Common myeloid progenitor, CD34-positive (primary cell): ENCODE measurements at regions of chr3 and their contacts with region 1.

Region 1: GRCh38 chr3:107740992-107741896 is 218.5 kb downstream of the BBX start:
- DNase-seq: peak; percentile 39 to 67 (median 55)
- H3K4me3 ChIP-seq: no peak overlapping the region
- H3K27ac ChIP-seq: no peak overlapping the region
- H3K4me1 ChIP-seq: peaks cover 0 to 3% (median under 1%) of the 10 kb centered on the region in 4 experiments
- H3K27me3 ChIP-seq: no peaks in the 10 kb centered on the region

Region 2: DNA sequence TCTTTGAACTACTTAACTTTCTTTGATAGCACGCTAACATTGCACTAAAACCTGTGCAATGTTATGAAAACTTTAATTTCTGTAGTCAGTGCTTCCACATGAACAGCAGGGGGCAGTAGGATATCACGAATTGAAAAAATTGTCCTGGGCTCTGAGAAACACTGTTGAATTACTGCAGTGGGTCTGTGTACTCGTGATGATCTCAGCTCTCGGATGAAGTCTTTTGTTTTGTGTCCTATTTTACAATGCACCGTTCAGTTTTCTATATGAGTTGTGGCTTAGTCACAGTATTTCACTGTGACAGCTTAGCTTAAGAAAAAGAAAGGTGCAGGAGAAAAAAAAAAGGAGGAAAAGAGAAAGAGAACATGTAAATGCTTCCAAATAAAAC is 505.3 kb before region 1 on chr3:
- CTCF ChIA-PET with region 1: interaction called, 32 read pairs
- POLR2A ChIA-PET with region 1: interaction called, 3 read pairs
- DNase-seq: peak; percentile 79 to 91 (median 85)
- H3K4me3 ChIP-seq: peak overlapping the region in 6 of 7 experiments; percentile 31 to 77 (median 49)
- H3K27ac ChIP-seq: no peak overlapping the region
- H3K4me1 ChIP-seq: peaks cover 0 to 7% (median 3%) of the 10 kb centered on the region in 4 experiments
- H3K27me3 ChIP-seq: no peaks in the 10 kb centered on the region

Region 3: DNA sequence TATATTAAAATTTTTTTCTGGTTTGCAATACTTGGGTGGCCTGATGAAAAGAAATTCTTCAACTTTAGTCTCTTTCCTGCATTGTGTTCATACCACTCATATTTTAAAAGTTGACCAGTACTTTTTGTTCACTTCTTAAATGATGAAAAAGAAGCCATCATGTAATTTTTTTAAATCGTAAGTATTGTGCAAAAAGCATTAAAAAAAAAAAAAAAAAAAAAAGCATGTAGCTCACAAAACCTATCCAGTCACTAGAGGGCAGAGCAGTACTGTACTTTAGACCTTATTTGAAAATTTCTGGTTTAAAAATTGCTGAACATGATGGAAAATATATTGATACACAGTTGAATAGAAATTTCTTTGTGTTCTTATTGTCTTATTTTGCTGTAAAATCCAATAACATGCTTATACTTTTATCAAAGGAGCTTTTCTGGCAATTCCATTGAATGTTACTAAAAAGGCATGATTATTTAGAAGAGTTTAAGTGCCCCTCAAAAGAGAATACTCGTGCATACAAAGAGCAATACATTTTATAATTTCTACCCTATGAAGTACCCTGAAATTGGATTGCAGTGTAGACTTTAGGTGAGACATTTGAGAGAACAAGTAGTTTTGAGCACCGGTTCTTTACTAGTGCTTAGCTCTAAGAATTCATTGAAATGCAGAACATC is 80.8 kb before region 1 on chr3:
- CTCF ChIA-PET with region 1: interaction called, 23 read pairs
- POLR2A ChIA-PET with region 1: no interaction called
- DNase-seq: peak; percentile 35 to 71 (median 63)
- H3K4me3 ChIP-seq: no peak overlapping the region
- H3K27ac ChIP-seq: no peak overlapping the region
- H3K4me1 ChIP-seq: no peaks in the 10 kb centered on the region
- H3K27me3 ChIP-seq: no peaks in the 10 kb centered on the region

Region 4: GRCh38 chr3:107690522-107691138 is 50.6 kb before region 1 on chr3:
- CTCF ChIA-PET with region 1: interaction called, 17 read pairs
- POLR2A ChIA-PET with region 1: no interaction called
- DNase-seq: peak; percentile 72 to 88 (median 86)
- H3K4me3 ChIP-seq: no peak overlapping the region
- H3K27ac ChIP-seq: no peak overlapping the region
- H3K4me1 ChIP-seq: no peaks in the 10 kb centered on the region
- H3K27me3 ChIP-seq: no peaks in the 10 kb centered on the region

Region 5: GRCh38 chr3:107753480-107753879 is 12.2 kb after region 1 on chr3:
- CTCF ChIA-PET with region 1: interaction called, 13 read pairs
- POLR2A ChIA-PET with region 1: no interaction called
- DNase-seq: peak; percentile 24 to 59 (median 57)
- H3K4me3 ChIP-seq: no peak overlapping the region
- H3K27ac ChIP-seq: no peak overlapping the region
- H3K4me1 ChIP-seq: no peaks in the 10 kb centered on the region
- H3K27me3 ChIP-seq: no peaks in the 10 kb centered on the region

Region 6: DNA sequence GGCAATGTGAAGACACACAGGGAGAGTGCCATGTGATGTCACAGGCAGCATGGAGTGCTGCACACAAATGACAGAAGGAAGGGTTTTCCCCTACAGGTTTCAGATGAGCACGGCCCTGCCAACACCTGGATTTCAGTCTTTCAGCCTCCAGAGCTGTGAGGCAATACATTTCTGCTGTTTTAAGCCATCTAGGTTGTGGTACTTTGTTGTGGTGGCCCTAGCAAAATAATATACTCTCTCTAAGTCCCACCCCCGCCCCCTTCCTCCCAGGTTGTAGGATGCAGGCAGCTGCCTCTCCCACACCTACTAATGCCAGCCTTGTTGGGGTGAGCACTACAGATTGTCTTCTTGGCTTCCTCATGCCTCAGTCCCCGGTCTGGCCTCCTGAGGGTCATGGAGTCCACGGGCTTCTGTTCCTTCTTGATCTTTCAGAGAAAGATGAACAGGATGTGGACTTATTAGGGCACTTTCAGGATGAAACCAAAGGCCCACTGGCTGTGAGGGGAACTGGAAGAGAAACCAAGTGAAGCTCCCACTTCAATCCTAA is 169.5 kb after region 1 on chr3:
- CTCF ChIA-PET with region 1: no interaction called
- POLR2A ChIA-PET with region 1: no interaction called
- DNase-seq: no peak
- H3K4me3 ChIP-seq: no peak overlapping the region
- H3K27ac ChIP-seq: no peak overlapping the region
- H3K4me1 ChIP-seq: no peaks in the 10 kb centered on the region
- H3K27me3 ChIP-seq: no peaks in the 10 kb centered on the region

Region 7: GRCh38 chr3:107992981-107993684 is 251.9 kb after region 1 on chr3:
- CTCF ChIA-PET with region 1: no interaction called
- POLR2A ChIA-PET with region 1: no interaction called
- DNase-seq: no peak
- H3K4me3 ChIP-seq: no peak overlapping the region
- H3K27ac ChIP-seq: no peak overlapping the region
- H3K4me1 ChIP-seq: peaks cover 0 to 8% (median 0%) of the 10 kb centered on the region in 4 experiments
- H3K27me3 ChIP-seq: no peaks in the 10 kb centered on the region